HCT116 (cell line): ENCODE measurements at regions of chr19 and their contacts with region 1.

Region 1: GRCh38 chr19:47124937-47125668 is 5.5 kb upstream of the SAE1 start:
- DNase-seq: peak; percentile 85
- ATAC-seq: peak; percentile 82
- H3K4me3 ChIP-seq: no peak overlapping the region
- H3K27ac ChIP-seq: no peak overlapping the region
- H3K4me1 ChIP-seq: peaks cover 26 to 40% of the 10 kb centered on the region in 2 experiments
- H3K27me3 ChIP-seq: no peaks in the 10 kb centered on the region
- CTCF ChIP-seq: peak; percentile 59 to 92 (median 75)
- POLR2A ChIP-seq: no peak
- RAD21 ChIP-seq: peak; percentile 96

Region 2: GRCh38 chr19:46860125-46860845 is 264.8 kb before region 1 on chr19:
- CTCF ChIA-PET with region 1: no interaction called
- POLR2A ChIA-PET with region 1: no interaction called
- RAD21 ChIA-PET with region 1: no interaction called
- intact Hi-C with region 1: loop called (anchors 10 kb)
- DNase-seq: peak; percentile 93
- ATAC-seq: peak; percentile 82
- H3K4me3 ChIP-seq: peak overlapping the region; percentile 54 to 64
- H3K27ac ChIP-seq: peak overlapping the region; percentile 99
- H3K4me1 ChIP-seq: peaks cover 31 to 55% of the 10 kb centered on the region in 2 experiments
- H3K27me3 ChIP-seq: no peaks in the 10 kb centered on the region
- CTCF ChIP-seq: no peak
- POLR2A ChIP-seq: peak; percentile 51
- RAD21 ChIP-seq: no peak

Region 3: DNA sequence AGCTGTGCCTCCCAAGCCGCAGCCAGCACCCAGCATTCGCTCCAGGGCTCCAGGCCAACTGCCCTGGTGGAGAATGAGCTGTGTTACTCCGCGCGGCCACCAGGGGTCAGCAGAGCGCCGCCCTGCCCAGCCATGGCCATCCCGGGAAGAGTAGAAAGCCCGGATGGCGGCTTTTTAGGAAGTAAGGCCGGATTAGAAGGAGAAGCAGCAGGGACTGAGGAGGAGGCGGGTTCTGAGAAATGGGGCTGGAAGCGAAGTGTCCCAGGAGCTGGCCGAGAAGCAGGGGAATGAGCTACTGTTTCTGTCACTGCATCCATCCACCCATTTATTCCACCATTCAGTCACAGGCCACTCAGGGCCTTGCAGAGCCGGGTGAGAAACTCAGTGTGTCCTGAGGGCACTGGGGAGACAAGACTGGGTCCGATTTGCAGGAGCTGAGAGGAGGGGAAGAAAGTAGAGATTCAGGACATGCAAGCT is 112.0 kb before region 1 on chr19:
- CTCF ChIA-PET with region 1: interaction called, 11 read pairs
- POLR2A ChIA-PET with region 1: no interaction called
- RAD21 ChIA-PET with region 1: interaction called in 1 of 2 experiments, 3 read pairs
- intact Hi-C with region 1: loop called (anchors 2 kb)
- DNase-seq: peak; percentile 40
- ATAC-seq: peak; percentile 97
- H3K4me3 ChIP-seq: peak overlapping the region in 1 of 2 experiments; percentile 10; a peak in 1 of 4 replicates
- H3K27ac ChIP-seq: no peak overlapping the region
- H3K4me1 ChIP-seq: peaks cover 4 to 11% of the 10 kb centered on the region in 2 experiments; a peak in 3 of 4 replicates
- H3K27me3 ChIP-seq: no peaks in the 10 kb centered on the region
- CTCF ChIP-seq: peak; percentile 93 to 98 (median 98)
- POLR2A ChIP-seq: no peak
- RAD21 ChIP-seq: peak; percentile 97

Region 4: GRCh38 chr19:47075179-47075810 is 49.8 kb before region 1 on chr19:
- CTCF ChIA-PET with region 1: interaction called, 17 read pairs
- POLR2A ChIA-PET with region 1: no interaction called
- RAD21 ChIA-PET with region 1: interaction called, 5 to 11 read pairs
- intact Hi-C with region 1: loop called (anchors 1 kb)
- DNase-seq: no peak
- ATAC-seq: no peak
- H3K4me3 ChIP-seq: no peak overlapping the region
- H3K27ac ChIP-seq: no peak overlapping the region
- H3K4me1 ChIP-seq: peaks cover 0 to 11% of the 10 kb centered on the region in 2 experiments; a peak in 3 of 4 replicates
- H3K27me3 ChIP-seq: no peaks in the 10 kb centered on the region
- CTCF ChIP-seq: no peak
- POLR2A ChIP-seq: no peak
- RAD21 ChIP-seq: no peak

Region 5: GRCh38 chr19:47157431-47158321 is 32.6 kb after region 1 on chr19:
- CTCF ChIA-PET with region 1: no interaction called
- POLR2A ChIA-PET with region 1: no interaction called
- RAD21 ChIA-PET with region 1: no interaction called
- intact Hi-C with region 1: no loop called
- DNase-seq: no peak
- ATAC-seq: peak; percentile 38; the same call in 1 of the 2 replicates
- H3K4me3 ChIP-seq: no peak overlapping the region
- H3K27ac ChIP-seq: peak overlapping the region; percentile 44; the same call in 1 of the 2 replicates
- H3K4me1 ChIP-seq: peaks cover 14 to 24% of the 10 kb centered on the region in 2 experiments; a peak in 2 of 4 replicates
- H3K27me3 ChIP-seq: no peaks in the 10 kb centered on the region
- CTCF ChIP-seq: no peak
- POLR2A ChIP-seq: no peak
- RAD21 ChIP-seq: no peak

Region 6: GRCh38 chr19:47778089-47778953 is 653.2 kb after region 1 on chr19 and contains the start of gene SELENOW:
- CTCF ChIA-PET with region 1: no interaction called
- POLR2A ChIA-PET with region 1: no interaction called
- RAD21 ChIA-PET with region 1: no interaction called
- intact Hi-C with region 1: no loop called
- DNase-seq: peak; percentile 55
- ATAC-seq: peak; percentile 89
- H3K4me3 ChIP-seq: peak within 1 kb of the TSS; percentile 97 to 99
- H3K27ac ChIP-seq: peak within 1 kb of the TSS; percentile 98
- H3K4me1 ChIP-seq: peaks cover 13 to 24% of the 10 kb centered on the region in 2 experiments; a peak in 3 of 4 replicates
- H3K27me3 ChIP-seq: no peaks in the 10 kb centered on the region
- CTCF ChIP-seq: no peak
- POLR2A ChIP-seq: peak; percentile 93
- RAD21 ChIP-seq: no peak
- total RNA-seq, gene SELENOW: 181 TPM